OCI-LY7 (cell line): ENCODE measurements at regions of chr9 and their contacts with region 1.

Region 1: DNA sequence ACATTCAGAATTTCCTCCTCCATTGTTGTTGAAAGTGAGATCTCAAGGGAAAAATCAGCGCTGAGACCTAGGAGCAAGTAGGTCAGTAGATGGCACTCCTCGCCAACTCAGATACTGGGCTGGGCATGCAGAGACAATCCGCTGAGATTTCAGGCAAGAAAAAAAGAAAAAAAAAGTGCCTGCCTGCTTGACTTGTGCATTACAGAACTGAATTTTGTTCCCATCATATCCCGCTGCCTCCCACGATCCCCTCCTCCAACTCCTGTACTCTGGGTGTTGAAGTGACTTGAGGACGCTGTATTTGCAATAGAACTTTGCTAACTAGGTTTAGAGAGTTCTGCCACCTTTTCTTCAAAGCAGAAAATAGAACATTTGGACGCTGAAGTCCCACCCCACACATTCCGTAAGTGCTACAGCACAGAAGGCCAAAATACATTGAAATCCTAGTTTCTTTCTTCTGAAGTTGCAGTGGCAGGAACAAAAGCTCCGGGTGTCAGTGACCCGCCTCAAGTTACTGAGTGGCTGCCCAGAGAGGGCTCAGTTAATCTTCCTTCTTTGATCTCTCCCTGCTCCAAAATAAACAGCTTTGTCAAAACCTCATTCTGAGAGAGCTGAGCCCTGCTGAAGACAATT is 265.8 kb downstream of the MLLT3 start:
- DNase-seq: peak; percentile 65
- H3K4me3 ChIP-seq: no peak overlapping the region
- H3K27ac ChIP-seq: no peak overlapping the region
- H3K4me1 ChIP-seq: peaks cover 6% of the 10 kb centered on the region
- CTCF ChIP-seq: peak; percentile 79

Region 2: DNA sequence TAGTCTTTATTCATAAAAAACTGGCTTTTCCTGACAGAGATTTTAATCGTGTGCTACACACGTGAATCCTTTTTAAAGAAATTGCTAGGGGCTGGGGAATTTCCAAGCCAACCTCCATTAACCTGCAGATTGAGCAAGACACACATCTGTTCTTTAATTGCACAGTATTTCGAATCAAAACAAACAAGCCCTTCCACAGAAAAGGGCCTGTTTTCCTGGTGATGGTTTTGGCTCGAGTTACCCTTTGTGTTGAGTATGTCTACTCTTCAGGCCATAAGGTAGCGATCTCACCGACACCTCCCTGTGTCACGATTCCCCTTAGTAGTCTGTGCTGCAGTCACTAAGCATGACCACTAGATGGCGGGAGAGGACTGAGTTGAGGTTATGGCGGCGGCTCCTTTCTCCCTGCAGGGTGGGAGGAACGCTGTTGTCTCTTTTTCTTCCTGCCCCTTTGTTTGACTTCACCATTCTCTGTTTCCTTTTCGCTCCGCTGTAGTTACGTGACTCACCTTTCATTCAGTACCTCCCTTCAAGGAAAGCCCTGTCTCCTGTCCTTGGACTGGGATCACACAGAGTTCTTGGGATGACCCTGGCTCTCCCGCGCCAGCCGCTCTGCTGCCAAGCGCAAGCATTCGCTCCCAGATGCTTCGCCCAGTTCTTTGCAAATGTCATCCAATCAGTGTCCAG is 430.6 kb before region 1 on chr9:
- CTCF ChIA-PET with region 1: no interaction called
- POLR2A ChIA-PET with region 1: no interaction called
- intact Hi-C with region 1: loop called (anchors 1 kb)
- DNase-seq: peak; percentile 72
- H3K4me3 ChIP-seq: no peak overlapping the region
- H3K27ac ChIP-seq: no peak overlapping the region
- H3K4me1 ChIP-seq: no peaks in the 10 kb centered on the region
- CTCF ChIP-seq: peak; percentile 96

Region 3: DNA sequence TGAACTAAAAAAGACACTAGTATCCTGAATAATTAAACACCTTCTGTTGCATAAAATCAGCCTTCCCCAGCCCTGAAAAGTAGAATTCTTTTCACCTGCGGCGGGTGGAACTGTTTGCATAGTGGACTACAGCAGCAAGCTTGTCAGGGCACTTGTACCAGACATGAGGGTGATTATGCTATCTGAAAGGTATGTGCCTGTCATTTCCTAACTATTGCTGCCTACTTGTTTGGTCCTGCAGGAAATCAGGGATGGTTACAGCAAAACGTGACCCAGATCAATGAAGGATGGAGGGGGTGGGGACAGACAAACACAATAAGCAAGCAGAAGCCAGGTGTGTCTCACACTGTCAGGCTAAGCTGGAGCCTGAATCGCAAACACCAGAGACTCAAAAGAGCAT is 119.8 kb before region 1 on chr9:
- CTCF ChIA-PET with region 1: no interaction called
- POLR2A ChIA-PET with region 1: no interaction called
- intact Hi-C with region 1: no loop called
- DNase-seq: no peak
- H3K4me3 ChIP-seq: no peak overlapping the region
- H3K27ac ChIP-seq: no peak overlapping the region
- H3K4me1 ChIP-seq: peaks cover 8% of the 10 kb centered on the region
- CTCF ChIP-seq: no peak